H1 (cell line): ENCODE measurements at regions of chr1 and their contacts with region 1.

Region 1: GRCh38 chr1:8409106-8409505 is 91.2 kb downstream of the SLC45A1 start:
- DNase-seq: no peak
- H3K4me3 ChIP-seq: no peak overlapping the region
- H3K27ac ChIP-seq: peak overlapping the region; percentile 47; the same call in 1 of the 2 replicates
- H3K4me1 ChIP-seq: peaks cover 23 to 47% (median 32%) of the 10 kb centered on the region in 4 experiments
- H3K27me3 ChIP-seq: no peaks in the 10 kb centered on the region
- CTCF ChIP-seq: peak in 2 of 3 experiments; percentile 1 to 51; a peak in 2 of 4 replicates
- EP300 ChIP-seq: no peak
- POLR2A ChIP-seq: no peak
- RAD21 ChIP-seq: peak; percentile 16 to 28; a peak in 3 of 4 replicates

Region 2: DNA sequence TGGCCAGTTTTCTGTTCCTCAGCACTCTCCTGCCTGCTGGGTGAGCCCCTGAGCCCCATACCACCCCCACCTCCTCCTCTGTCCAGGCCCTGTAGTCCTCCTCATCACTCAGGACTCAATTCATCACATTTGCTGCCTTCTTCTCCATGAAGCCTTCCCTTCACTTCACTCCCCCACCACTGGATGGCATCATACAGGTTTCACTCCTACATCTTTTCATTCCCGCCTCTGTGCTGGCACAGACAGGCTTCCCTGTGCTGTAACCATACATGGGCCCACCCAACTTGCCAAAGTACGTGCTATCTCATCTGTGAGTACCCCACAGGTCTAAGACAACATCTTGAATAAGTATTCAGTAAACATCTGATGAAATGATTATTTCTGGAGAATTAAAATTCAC is 34.3 kb before region 1 on chr1:
- CTCF ChIA-PET with region 1: interaction called, 19 read pairs
- POLR2A ChIA-PET with region 1: no interaction called
- DNase-seq: no peak
- H3K4me3 ChIP-seq: no peak overlapping the region
- H3K27ac ChIP-seq: 0 out of 2 replicates have a peak overlapping the region, but pooled peaks have one; percentile 11
- H3K4me1 ChIP-seq: peaks cover 28 to 43% (median 41%) of the 10 kb centered on the region in 4 experiments
- H3K27me3 ChIP-seq: no peaks in the 10 kb centered on the region
- CTCF ChIP-seq: peak; percentile 47 to 79 (median 56)
- EP300 ChIP-seq: no peak
- POLR2A ChIP-seq: no peak
- RAD21 ChIP-seq: peak; percentile 57 to 66; a peak in 3 of 4 replicates

Region 3: DNA sequence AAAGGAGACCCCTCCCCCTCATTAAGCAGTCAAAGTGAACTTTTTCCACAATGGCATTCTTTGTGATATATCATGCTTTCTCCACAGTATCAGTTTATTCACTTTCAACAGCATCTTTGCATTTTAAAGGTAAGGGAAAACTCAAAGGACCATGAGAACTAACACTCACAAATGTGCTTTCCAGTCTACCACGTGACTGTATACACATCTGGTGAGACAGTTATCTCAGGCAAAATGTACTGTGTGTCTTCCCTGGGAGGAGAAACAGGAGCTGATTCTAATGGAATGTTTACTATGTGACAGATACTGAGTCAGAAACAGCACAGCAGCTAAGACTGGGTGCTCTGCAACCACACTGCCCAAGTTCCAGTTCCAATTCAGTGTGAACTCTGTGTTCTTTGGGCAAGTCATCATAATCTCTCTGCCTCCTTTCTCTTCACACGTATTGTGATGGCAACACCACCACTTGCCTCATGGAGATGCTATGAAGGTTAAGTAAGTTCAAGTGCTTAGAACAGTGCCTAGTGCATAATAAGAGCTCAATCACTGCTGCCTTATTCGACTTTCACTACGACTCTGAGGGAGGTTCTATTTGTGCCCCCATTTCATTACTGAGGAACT is 12.2 kb before region 1 on chr1:
- CTCF ChIA-PET with region 1: interaction called, 40 read pairs
- POLR2A ChIA-PET with region 1: interaction called, 5 read pairs
- DNase-seq: no peak
- H3K4me3 ChIP-seq: no peak overlapping the region
- H3K27ac ChIP-seq: no peak overlapping the region
- H3K4me1 ChIP-seq: peaks cover 9 to 27% (median 20%) of the 10 kb centered on the region in 4 experiments
- H3K27me3 ChIP-seq: no peaks in the 10 kb centered on the region
- CTCF ChIP-seq: no peak
- EP300 ChIP-seq: no peak
- POLR2A ChIP-seq: no peak
- RAD21 ChIP-seq: no peak

Region 4: GRCh38 chr1:8423650-8424538 is 14.8 kb after region 1 on chr1:
- CTCF ChIA-PET with region 1: interaction called, 29 read pairs
- POLR2A ChIA-PET with region 1: interaction called, 7 read pairs
- DNase-seq: peak; percentile 41 to 87
- H3K4me3 ChIP-seq: peak overlapping the region; percentile 64 to 88 (median 72)
- H3K27ac ChIP-seq: peak overlapping the region; percentile 73
- H3K4me1 ChIP-seq: peaks cover 15 to 22% (median 21%) of the 10 kb centered on the region in 4 experiments
- H3K27me3 ChIP-seq: no peaks in the 10 kb centered on the region
- CTCF ChIP-seq: no peak
- EP300 ChIP-seq: no peak
- POLR2A ChIP-seq: no peak
- RAD21 ChIP-seq: peak; percentile 7 to 13; a peak in 1 of 4 replicates